ENCODE measurements at regions of chr12 and their contacts with region 1.

Region 1: DNA sequence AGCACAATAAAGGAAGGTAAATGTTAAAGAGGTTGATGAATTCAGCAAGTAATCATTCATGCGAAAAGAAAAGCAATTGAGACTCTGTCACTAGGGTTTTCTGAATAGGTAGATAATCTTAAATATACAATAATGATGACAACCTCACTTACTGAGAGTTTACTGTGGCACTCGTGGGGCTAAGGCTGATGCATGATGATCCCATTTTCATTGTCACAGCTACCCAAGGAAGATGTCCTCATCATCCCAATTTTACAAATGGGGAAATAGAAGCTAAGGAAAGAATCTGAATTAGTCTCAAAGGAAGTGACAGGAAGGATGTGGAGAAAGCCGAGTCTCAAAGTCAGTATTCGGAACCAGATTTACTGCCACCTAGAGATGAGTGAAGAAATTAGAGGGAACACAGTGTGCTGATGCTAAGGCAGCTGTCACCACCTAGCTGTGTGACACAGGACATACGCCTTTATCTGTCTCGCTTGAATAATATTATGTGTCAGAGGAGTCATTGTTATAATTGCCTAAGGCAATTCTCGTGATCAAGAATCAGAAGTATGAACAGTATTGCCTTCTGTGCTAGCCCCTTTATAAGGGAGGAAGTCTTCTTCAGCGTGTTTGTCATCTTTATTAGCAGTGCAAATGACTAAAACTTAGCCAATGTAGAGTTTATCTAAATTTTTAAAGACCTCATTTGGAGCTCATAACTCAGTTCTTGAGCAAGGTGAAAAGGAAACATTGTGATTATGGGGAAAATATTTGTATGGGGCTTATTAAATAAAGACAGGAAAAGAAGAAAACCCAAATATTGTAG is 63.2 kb downstream of the ERGIC2 start:
- DNase-seq: peak; percentile 11 to 69 (median 32)
- ATAC-seq: peak; percentile 100
- H3K4me3 ChIP-seq: no peak overlapping the region
- H3K27ac ChIP-seq: no peak overlapping the region
- H3K4me1 ChIP-seq: no peaks in the 10 kb centered on the region; a peak in 1 of 5 replicates
- H3K27me3 ChIP-seq: no peaks in the 10 kb centered on the region
- CTCF ChIP-seq: peak; percentile 79 to 99 (median 99)
- EP300 ChIP-seq: no peak
- POLR2A ChIP-seq: no peak
- RAD21 ChIP-seq: peak; percentile 89 to 94

Region 2: DNA sequence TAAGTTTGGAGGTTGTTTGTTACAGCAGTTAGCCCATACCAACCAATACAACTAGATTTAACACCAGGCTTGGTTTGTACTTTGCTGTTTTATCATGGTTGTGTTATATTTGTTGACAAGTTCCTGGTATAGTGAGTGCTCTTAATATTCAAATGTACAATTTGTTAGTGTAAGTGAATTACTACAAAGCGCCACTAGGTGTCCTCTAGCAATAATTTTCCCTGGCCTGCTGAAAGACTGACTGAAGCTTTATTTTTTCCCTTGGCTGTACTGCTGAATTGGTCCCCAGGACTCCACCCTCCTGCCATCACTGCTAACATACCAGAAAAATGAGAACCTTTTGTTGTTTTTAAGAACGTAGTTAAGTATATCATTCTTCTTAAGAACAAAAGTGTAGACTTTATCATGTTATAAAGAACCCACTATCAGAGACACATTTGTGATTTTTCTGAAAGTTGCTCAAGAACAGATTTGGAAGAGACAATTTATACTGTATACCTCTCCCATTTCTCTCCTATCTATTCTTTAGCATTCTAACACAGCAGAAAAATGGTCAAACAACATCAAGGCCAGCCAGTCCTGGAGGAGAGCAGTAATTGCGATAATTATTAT is 244.0 kb before region 1 on chr12:
- CTCF ChIA-PET with region 1: interaction called, 13 read pairs
- POLR2A ChIA-PET with region 1: no interaction called
- in situ Hi-C with region 1: no loop called
- intact Hi-C with region 1: loop called (anchors 1 kb)
- DNase-seq: peak; percentile 10 to 40 (median 30)
- ATAC-seq: peak; percentile 77
- H3K4me3 ChIP-seq: no peak overlapping the region
- H3K27ac ChIP-seq: no peak overlapping the region
- H3K4me1 ChIP-seq: no peaks in the 10 kb centered on the region
- H3K27me3 ChIP-seq: no peaks in the 10 kb centered on the region
- CTCF ChIP-seq: peak; percentile 38 to 68 (median 56); a peak in 5 of 6 replicates
- EP300 ChIP-seq: no peak
- POLR2A ChIP-seq: no peak
- RAD21 ChIP-seq: peak; percentile 71

Region 3: GRCh38 chr12:29088611-29089219 is 229.0 kb before region 1 on chr12:
- CTCF ChIA-PET with region 1: interaction called, 10 read pairs
- POLR2A ChIA-PET with region 1: no interaction called
- in situ Hi-C with region 1: no loop called
- intact Hi-C with region 1: loop called (anchors 2 kb)
- DNase-seq: peak in 2 of 4 experiments; percentile 4 to 7
- ATAC-seq: no peak
- H3K4me3 ChIP-seq: no peak overlapping the region
- H3K27ac ChIP-seq: no peak overlapping the region
- H3K4me1 ChIP-seq: no peaks in the 10 kb centered on the region
- H3K27me3 ChIP-seq: no peaks in the 10 kb centered on the region
- CTCF ChIP-seq: peak; percentile 9 to 54 (median 23); a peak in 3 of 6 replicates
- EP300 ChIP-seq: no peak
- POLR2A ChIP-seq: no peak
- RAD21 ChIP-seq: peak; percentile 44 to 64